ENCODE measurements at regions of chr4 and their contacts with region 1.

Region 1: GRCh38 chr4:120963449-120963848 is 40.9 kb upstream of the PRDM5 start:
- DNase-seq: no peak
- H3K4me3 ChIP-seq: no peak overlapping the region
- H3K27ac ChIP-seq: no peak overlapping the region
- H3K4me1 ChIP-seq: no peaks in the 10 kb centered on the region
- H3K27me3 ChIP-seq: no peaks in the 10 kb centered on the region
- CTCF ChIP-seq: no peak

Region 2: GRCh38 chr4:120977435-120977997 is 14.1 kb after region 1 on chr4:
- CTCF ChIA-PET with region 1: interaction called, 11 read pairs
- POLR2A ChIA-PET with region 1: no interaction called
- intact Hi-C with region 1: no loop called
- DNase-seq: no peak
- H3K4me3 ChIP-seq: no peak overlapping the region
- H3K27ac ChIP-seq: no peak overlapping the region
- H3K4me1 ChIP-seq: no peaks in the 10 kb centered on the region
- H3K27me3 ChIP-seq: no peaks in the 10 kb centered on the region
- CTCF ChIP-seq: peak; percentile 58